ENCODE measurements at regions of chr1 and their contacts with region 1.

Region 1: GRCh38 chr1:41432481-41433280 is 51.8 kb downstream of the EDN2 start:
- DNase-seq: peak; percentile 86
- H3K4me3 Mint-ChIP-seq: no peak overlapping the region
- H3K27ac Mint-ChIP-seq: no peak overlapping the region
- H3K4me1 Mint-ChIP-seq: no peaks in the 10 kb centered on the region
- H3K27me3 Mint-ChIP-seq: peaks cover 19% of the 10 kb centered on the region

Region 2: DNA sequence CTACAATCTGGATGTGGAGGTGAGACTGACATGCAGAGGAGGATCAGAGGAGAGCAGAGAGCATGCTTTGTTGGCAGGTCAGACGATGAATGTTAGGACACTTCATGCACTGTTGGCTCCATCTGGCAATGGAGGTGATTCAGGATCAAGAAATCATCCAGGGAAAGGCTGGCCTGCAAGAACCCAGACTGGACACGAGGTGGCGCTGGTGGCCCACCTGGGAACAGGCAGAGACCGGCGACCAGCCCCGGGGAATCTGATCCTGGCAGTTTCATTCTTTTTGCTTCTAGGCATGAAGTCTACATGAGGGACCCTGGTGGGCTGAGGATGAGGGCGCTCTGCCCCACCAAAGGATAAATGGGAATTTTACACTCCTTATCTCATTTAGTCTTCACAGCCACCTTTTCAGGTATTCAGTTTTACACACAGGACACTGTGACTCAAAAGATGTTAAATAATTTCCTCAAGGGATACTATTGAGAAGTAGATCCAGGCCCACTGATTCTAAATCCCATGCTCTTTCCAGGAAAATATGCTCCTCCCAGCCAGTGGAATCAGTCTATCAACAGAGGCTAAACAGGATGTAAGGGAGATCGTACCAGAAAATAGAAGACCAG is 164.4 kb before region 1 on chr1:
- CTCF ChIA-PET with region 1: interaction called, 6 read pairs
- intact Hi-C with region 1: loop called (anchors 1 kb)
- DNase-seq: peak; percentile 77
- H3K4me3 Mint-ChIP-seq: no peak overlapping the region
- H3K27ac Mint-ChIP-seq: no peak overlapping the region
- H3K4me1 Mint-ChIP-seq: no peaks in the 10 kb centered on the region
- H3K27me3 Mint-ChIP-seq: no peaks in the 10 kb centered on the region

Region 3: DNA sequence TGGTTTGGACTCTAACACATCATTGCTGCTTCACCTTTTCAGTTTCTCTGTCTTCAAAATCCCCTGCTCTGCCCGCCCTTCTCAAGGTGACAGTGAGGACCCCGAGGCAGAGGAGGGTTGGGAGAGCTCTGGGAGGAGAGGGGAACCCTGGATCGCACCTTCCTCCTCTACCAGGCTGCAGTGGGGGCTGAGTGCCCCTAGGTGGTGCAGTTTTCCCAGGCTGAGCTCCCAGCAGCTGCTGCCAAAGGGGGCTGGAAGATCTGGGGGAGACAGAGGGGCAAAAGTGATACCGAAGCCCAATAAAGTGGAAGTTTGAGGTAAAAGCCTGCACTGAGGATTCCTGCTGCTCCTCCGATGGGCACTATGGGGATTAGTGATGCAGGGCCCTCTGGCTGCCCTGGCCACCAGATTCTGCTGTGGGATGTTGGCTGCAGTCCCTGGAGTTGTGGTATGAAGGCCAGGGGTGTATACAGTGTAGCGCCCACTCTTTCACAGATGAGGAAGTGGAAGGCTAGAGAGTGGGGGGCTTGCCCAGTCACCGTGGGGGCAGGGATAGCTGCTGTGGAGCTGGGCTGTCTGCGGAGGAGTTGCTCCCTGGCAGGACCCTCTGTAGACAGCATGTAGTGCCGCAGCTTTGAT is 149.9 kb before region 1 on chr1:
- CTCF ChIA-PET with region 1: interaction called, 8 read pairs
- intact Hi-C with region 1: loop called (anchors 5 kb)
- DNase-seq: peak; percentile 43
- H3K4me3 Mint-ChIP-seq: no peak overlapping the region
- H3K27ac Mint-ChIP-seq: no peak overlapping the region
- H3K4me1 Mint-ChIP-seq: no peaks in the 10 kb centered on the region
- H3K27me3 Mint-ChIP-seq: peaks cover 28% of the 10 kb centered on the region

Region 4: GRCh38 chr1:41322835-41323627 is 109.7 kb before region 1 on chr1:
- CTCF ChIA-PET with region 1: interaction called, 9 read pairs
- intact Hi-C with region 1: loop called (anchors 5 kb)
- DNase-seq: peak; percentile 52
- H3K4me3 Mint-ChIP-seq: no peak overlapping the region
- H3K27ac Mint-ChIP-seq: no peak overlapping the region
- H3K4me1 Mint-ChIP-seq: no peaks in the 10 kb centered on the region
- H3K27me3 Mint-ChIP-seq: peaks cover 2% of the 10 kb centered on the region

Measured in activated naive CD4-positive, alpha-beta T cell treated with anti-CD3 and anti-CD28 coated beads for 36 hours (primary cell).